ENCODE measurements at regions of chr20 and their contacts with region 1.

Region 1: DNA sequence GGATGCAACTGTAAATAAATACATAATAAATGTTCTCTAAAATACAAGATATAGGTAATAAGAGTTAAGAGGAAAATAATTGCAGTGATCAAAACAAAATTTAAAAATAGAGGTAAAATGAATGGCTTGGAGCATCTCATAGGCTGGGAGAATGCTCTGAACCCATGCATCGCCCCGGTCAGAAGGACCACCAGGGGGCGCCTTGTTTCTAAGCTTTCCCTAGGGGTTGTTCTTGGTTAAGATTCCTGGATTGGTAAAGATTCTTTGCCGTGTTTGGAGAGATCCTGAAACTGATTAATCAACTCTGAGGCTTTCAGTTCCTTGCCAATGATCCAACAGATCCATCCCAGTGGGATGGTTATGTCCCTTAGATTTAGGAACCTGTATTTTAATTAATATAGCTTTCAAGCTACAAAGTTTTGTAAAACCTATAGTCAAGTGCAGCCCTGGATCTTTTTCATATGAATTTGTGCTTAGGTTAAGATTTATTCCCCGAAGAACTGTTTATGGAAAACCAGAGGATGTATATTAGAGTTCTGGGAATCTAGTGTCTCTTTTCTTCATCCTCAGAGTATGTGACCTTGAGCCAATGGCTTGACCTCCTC is 45.3 kb upstream of the PRELID3B start:
- DNase-seq: peak; percentile 52
- ATAC-seq: peak; percentile 99
- H3K4me3 ChIP-seq: no peak overlapping the region
- H3K27ac ChIP-seq: no peak overlapping the region
- H3K4me1 ChIP-seq: peaks cover 0 to 3% of the 10 kb centered on the region in 2 experiments; a peak in 2 of 4 replicates
- H3K27me3 ChIP-seq: peaks cover 35% of the 10 kb centered on the region
- CTCF ChIP-seq: peak; percentile 73 to 91 (median 86); a peak in 5 of 6 replicates
- POLR2A ChIP-seq: no peak
- RAD21 ChIP-seq: peak; percentile 65

Region 2: DNA sequence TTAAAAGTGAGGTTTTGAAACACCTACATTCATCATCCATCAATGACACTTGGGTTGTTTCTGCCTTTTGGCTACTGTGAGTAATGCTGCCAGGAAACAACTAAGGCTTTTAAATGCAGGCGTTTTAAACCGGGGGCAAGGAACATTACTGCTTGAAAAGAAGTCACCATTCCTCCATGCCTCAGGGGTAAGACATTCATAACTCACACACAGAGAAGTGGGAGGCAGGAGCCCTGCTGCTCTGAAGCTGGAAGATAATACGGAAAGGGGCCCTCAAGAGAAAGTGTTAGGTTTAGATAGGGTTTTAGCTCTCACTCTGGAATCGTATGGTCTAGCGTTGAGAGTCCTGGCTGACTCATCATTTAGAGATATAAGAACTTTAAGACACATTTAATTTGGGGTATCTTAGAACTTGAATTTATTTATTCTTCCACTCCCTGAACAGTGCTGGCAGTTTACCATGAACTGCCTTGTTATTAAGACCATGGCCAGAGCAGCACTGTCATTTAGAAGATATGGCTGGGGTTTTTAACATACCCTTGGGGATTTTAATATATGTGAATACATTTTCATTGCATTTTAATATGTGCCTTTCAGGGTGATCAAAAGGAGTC is 66.9 kb before region 1 on chr20:
- CTCF ChIA-PET with region 1: no interaction called
- POLR2A ChIA-PET with region 1: no interaction called
- RAD21 ChIA-PET with region 1: no interaction called
- intact Hi-C with region 1: no loop called
- DNase-seq: no peak
- ATAC-seq: no peak
- H3K4me3 ChIP-seq: no peak overlapping the region
- H3K27ac ChIP-seq: no peak overlapping the region
- H3K4me1 ChIP-seq: peaks cover 0 to 5% of the 10 kb centered on the region in 2 experiments; a peak in 2 of 4 replicates
- H3K27me3 ChIP-seq: no peaks in the 10 kb centered on the region
- CTCF ChIP-seq: no peak
- POLR2A ChIP-seq: no peak
- RAD21 ChIP-seq: no peak

Region 3: GRCh38 chr20:59102841-59103299 is 14.9 kb after region 1 on chr20:
- CTCF ChIA-PET with region 1: interaction called, 14 read pairs
- POLR2A ChIA-PET with region 1: no interaction called
- RAD21 ChIA-PET with region 1: no interaction called
- intact Hi-C with region 1: no loop called
- DNase-seq: no peak
- ATAC-seq: no peak
- H3K4me3 ChIP-seq: no peak overlapping the region
- H3K27ac ChIP-seq: no peak overlapping the region
- H3K4me1 ChIP-seq: no peaks in the 10 kb centered on the region
- H3K27me3 ChIP-seq: peaks cover 35% of the 10 kb centered on the region
- CTCF ChIP-seq: no peak
- POLR2A ChIP-seq: no peak
- RAD21 ChIP-seq: no peak

Region 4: DNA sequence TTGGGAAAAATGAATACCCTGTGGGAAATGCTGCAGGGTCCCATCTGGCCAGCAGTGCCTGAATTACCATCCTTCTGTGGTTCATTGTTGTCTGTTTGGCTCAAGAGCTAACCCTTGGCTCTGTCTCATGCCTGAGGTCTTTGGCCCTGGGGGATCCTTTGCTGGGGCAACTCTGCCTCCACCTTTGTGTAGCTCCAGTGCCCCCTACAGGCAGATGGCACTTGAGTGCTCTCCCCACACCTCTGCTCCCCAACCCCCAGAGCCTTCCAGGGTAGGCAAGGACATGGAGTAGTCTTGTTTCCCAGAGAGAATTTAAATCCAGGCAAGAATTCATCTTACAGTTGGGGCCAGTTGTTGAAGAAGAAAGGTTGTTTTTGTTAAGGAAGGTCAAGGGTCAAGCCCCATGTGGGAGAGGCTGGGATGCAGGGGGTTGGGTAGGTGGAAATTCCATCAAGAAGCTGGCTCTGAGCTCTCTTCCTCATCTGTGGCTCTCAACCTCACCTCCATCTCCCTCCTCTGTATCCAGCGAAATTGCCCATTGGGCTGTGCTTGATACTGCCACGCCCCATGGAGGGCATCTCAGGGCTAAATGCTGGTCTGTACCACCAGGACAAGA is 119.9 kb after region 1 on chr20:
- CTCF ChIA-PET with region 1: interaction called, 11 read pairs
- POLR2A ChIA-PET with region 1: no interaction called
- RAD21 ChIA-PET with region 1: no interaction called
- intact Hi-C with region 1: no loop called
- DNase-seq: peak; percentile 16
- ATAC-seq: peak; percentile 90
- H3K4me3 ChIP-seq: no peak overlapping the region
- H3K27ac ChIP-seq: no peak overlapping the region
- H3K4me1 ChIP-seq: no peaks in the 10 kb centered on the region
- H3K27me3 ChIP-seq: peaks cover 22% of the 10 kb centered on the region
- CTCF ChIP-seq: peak; percentile 53 to 72 (median 67); a peak in 5 of 6 replicates
- POLR2A ChIP-seq: no peak
- RAD21 ChIP-seq: peak; percentile 71

Region 5: GRCh38 chr20:59222253-59223181 is 134.6 kb after region 1 on chr20:
- CTCF ChIA-PET with region 1: interaction called, 17 read pairs
- POLR2A ChIA-PET with region 1: no interaction called
- RAD21 ChIA-PET with region 1: no interaction called
- intact Hi-C with region 1: loop called (anchors 1 kb)
- DNase-seq: peak; percentile 33
- ATAC-seq: peak; percentile 97
- H3K4me3 ChIP-seq: peak overlapping the region; percentile 23 to 41
- H3K27ac ChIP-seq: no peak overlapping the region
- H3K4me1 ChIP-seq: peaks cover 0 to 10% of the 10 kb centered on the region in 2 experiments; a peak in 1 of 4 replicates
- H3K27me3 ChIP-seq: peaks cover 34% of the 10 kb centered on the region
- CTCF ChIP-seq: peak; percentile 78 to 97 (median 90)
- POLR2A ChIP-seq: no peak
- RAD21 ChIP-seq: peak; percentile 81

Region 6: DNA sequence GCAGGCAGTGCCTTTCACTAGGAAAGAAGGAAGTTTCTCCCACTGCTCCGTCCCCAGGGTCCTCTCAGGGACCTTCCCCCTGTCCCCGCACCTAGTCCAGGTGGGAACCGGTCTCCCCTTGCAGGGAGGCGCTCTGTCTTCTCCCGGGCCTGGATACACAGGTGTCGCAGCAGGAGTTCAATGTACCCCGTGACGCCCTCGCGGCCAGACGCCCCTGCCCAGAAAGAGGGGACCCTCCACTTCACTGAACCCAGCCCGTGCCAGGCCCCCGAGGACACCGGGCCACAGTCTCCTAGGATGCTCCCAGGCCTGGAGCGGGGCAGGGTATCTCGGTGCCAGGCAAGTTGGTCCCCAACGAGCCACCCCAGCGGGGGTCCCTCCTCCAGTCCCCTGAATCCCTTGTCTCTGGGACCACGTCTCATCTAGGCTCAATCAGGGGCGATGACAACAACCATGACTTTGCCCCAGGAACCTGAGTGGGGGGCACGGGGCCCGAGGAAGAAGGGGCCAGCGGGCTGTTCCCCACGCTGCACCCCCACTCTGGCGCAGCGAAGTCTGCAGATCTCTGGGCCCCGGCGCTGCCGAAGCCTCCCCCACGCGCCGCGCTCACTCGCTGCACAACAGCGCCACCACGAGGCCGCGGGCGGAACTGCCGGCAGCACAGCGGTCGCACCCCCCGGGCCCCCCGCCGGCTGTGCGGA is 315.5 kb after region 1 on chr20:
- CTCF ChIA-PET with region 1: interaction called, 6 read pairs
- POLR2A ChIA-PET with region 1: interaction called, 3 read pairs
- RAD21 ChIA-PET with region 1: no interaction called
- intact Hi-C with region 1: loop called (anchors 2 kb)
- DNase-seq: no peak
- ATAC-seq: peak; percentile 90
- H3K4me3 ChIP-seq: no peak overlapping the region
- H3K27ac ChIP-seq: no peak overlapping the region
- H3K4me1 ChIP-seq: peaks cover 0 to 2% of the 10 kb centered on the region in 2 experiments; a peak in 1 of 4 replicates
- H3K27me3 ChIP-seq: peaks cover 81% of the 10 kb centered on the region
- CTCF ChIP-seq: peak; percentile 57 to 96 (median 95)
- POLR2A ChIP-seq: no peak
- RAD21 ChIP-seq: peak; percentile 83